HEK293 (cell line): ENCODE measurements at regions of chr12 and their contacts with region 1.

Region 1: DNA sequence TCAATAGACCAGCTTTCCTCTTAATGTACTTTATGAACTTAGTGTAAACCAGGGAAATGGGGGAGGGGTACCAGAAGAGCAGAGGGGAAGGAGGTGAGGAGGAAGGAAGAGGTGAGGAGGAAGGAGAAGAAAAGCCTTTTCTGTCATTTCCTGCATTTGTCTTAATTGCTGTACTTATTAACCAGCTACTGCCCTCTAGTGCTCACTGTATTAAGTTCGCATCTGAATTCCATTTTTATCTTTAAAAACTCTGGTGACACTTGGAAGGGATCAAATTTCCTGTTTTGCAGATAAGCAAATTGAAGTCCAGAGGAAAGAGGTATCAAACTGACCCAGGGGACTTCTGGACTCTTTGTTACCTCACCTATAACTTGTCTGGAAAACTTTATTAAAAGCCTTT is 22.2 kb downstream of the MANSC1 start:
- H3K4me3 ChIP-seq: no peak overlapping the region
- H3K27ac ChIP-seq: no peak overlapping the region
- H3K4me1 ChIP-seq: peaks cover 2% of the 10 kb centered on the region; the same call in 1 of the 2 replicates
- CTCF ChIP-seq: peak; percentile 34; the same call in 1 of the 2 replicates

Region 2: GRCh38 chr12:12081836-12082497 is 245.8 kb before region 1 on chr12:
- CTCF ChIA-PET with region 1: interaction called, 40 read pairs
- POLR2A ChIA-PET with region 1: no interaction called
- H3K4me3 ChIP-seq: no peak overlapping the region
- H3K27ac ChIP-seq: no peak overlapping the region
- H3K4me1 ChIP-seq: no peaks in the 10 kb centered on the region
- CTCF ChIP-seq: peak; percentile 7; the same call in 1 of the 2 replicates

Region 3: GRCh38 chr12:12210983-12211382 is 116.8 kb before region 1 on chr12:
- CTCF ChIA-PET with region 1: no interaction called
- POLR2A ChIA-PET with region 1: no interaction called
- H3K4me3 ChIP-seq: no peak overlapping the region
- H3K27ac ChIP-seq: no peak overlapping the region
- H3K4me1 ChIP-seq: peaks cover 18% of the 10 kb centered on the region
- CTCF ChIP-seq: no peak

Region 4: DNA sequence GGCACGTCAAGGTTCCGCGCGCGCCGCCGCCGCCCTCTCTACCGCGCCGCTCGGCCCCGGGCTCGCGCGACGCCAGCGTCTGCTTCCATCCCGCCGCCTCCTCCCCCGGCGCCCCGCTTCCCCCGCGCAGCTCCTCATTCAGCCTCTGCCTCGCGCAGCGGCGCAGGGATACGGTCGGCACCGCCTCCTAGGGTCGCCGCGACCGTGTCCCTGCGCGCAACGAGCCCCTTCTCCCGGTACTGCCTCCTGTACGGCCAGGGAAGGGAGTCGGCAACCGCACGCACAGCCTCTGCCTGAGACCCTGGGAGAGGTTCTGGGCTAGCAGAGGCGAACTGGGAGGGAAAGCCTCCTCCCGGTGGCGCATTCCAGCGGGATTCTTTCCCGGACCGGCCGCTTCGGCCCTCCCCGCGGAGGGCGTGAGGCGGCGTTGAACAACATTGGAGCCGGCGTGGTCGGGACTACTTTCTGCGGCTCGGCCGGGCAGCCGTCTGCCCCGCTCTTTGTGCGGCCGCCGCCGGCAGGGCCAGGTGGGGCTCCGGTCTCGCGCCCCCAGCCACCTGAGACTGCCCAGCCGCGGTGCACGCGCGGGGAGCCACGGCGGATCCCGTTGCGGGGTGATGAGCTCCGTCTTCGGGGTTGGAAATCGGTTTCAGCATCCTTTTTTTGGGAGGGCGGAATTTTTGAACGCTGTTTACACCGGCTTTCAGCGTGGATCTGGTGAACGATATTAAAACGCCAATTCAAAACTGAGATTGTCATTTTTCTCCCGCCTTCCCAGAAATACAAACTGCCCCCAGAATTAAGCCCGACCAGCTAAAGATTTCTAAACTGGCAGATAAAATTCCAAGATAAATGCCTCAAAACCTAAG is 60.7 kb before region 1 on chr12 and contains the start of gene LRP6:
- CTCF ChIA-PET with region 1: interaction called, 12 read pairs
- POLR2A ChIA-PET with region 1: interaction called, 12 read pairs
- H3K4me3 ChIP-seq: peak within 1 kb of the TSS; percentile 98
- H3K27ac ChIP-seq: peak within 1 kb of the TSS; percentile 100
- H3K4me1 ChIP-seq: no peaks in the 10 kb centered on the region; the same call in 1 of the 2 replicates
- CTCF ChIP-seq: peak; percentile 63

Region 5: DNA sequence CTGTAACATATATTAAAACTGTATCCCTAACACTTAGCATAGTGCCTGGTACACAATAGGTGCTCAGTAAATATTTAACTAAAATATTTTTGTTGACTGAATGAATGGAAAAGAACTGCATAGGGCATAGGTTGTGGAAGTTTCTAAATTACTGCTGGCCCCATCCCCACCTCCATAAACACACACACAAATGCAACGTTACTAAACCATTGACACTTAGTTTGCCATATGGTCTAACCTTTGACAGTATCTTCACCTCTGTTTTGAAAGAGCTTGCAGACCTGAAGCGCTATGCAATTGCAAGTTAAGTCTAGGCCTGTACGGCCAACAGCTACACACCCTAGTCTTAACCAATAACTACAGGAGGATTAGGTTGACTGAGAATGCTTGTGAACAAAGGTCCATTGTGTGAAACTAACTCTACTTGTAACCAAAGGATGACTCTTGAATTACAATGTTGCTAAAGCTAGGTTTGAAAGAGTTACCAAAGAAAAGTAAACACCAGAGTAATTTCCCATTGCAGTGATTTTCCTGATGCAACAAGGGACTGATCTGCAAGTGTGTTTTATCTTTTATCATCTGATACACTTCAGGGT is 23.2 kb after region 1 on chr12:
- CTCF ChIA-PET with region 1: interaction called, 10 read pairs
- POLR2A ChIA-PET with region 1: interaction called, 4 read pairs
- H3K4me3 ChIP-seq: no peak overlapping the region
- H3K27ac ChIP-seq: 0 out of 2 replicates have a peak overlapping the region, but pooled peaks have one; percentile 69
- H3K4me1 ChIP-seq: peaks cover 3% of the 10 kb centered on the region; the same call in 1 of the 2 replicates
- CTCF ChIP-seq: no peak

Region 6: DNA sequence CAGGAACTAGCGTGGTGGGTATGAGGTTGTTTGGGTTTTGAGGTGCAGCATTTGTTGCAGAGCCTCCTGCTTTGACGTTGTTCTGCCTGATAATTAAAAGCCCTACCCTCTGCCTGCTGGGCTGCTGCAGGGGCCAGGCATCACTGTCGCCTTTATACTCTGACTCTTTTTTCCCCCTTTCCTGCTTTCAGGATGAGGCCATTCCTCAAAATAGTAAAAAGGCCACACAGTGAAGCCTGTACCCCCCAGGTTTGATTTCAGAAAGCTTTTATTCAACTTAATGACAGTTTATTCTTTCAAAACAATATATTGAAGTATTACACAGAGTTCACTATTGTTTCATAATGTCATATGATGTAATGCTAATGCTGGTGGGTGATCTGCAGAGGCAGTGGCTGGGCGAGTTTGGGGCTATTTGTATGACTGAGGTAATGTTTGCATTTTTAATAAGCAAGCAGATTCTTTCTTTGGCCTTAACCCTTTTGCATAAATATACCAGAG is 38.2 kb after region 1 on chr12:
- CTCF ChIA-PET with region 1: no interaction called
- POLR2A ChIA-PET with region 1: no interaction called
- H3K4me3 ChIP-seq: no peak overlapping the region
- H3K27ac ChIP-seq: no peak overlapping the region; the same call in 1 of the 2 replicates
- H3K4me1 ChIP-seq: peaks cover 5% of the 10 kb centered on the region; the same call in 1 of the 2 replicates
- CTCF ChIP-seq: no peak

Region 7: DNA sequence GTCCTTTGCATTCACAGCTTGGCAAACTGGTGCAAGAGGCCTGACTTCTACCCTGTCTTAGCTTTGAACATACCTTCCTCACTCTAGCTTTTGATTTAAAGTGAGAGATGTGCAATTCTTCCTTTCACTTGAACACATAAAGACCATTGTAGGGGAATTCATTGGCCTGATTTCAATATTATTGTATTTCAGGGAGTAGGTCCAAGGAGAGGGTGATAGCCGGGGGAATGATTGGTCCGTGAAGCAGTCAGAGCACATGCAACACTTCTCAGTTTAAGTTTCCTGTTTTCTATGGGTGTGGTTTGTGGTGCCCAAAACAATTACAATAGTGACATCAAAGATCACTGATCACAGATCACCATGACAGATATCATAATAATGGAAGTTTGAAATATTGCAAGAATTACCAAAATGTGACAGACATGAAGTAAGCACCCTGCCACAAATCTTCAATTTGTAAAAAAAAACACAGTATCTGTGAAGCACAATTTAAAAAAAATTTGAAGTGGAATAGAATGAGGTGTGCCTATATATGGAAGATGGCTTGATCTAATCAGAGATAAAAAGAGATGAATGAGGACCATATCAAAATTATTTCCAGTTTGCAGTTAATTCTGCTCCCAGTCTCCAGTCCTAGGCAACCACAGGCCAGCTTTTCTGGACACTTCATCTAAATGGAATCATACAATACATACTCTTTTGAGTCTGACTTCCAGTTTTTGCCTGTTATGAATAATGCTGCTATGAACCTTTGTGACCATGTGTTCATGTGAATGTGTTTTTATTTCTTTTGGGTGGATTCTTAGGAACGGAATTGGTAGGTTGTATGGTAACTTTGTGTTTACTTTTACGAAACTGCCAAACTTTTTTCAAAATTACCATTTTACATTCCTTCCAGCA is 52.3 kb after region 1 on chr12:
- CTCF ChIA-PET with region 1: no interaction called
- POLR2A ChIA-PET with region 1: no interaction called
- H3K4me3 ChIP-seq: no peak overlapping the region
- H3K27ac ChIP-seq: no peak overlapping the region
- H3K4me1 ChIP-seq: 0 out of 2 replicates have a peak, but pooled peaks cover 2% of the 10 kb centered on the region
- CTCF ChIP-seq: no peak

Region 8: DNA sequence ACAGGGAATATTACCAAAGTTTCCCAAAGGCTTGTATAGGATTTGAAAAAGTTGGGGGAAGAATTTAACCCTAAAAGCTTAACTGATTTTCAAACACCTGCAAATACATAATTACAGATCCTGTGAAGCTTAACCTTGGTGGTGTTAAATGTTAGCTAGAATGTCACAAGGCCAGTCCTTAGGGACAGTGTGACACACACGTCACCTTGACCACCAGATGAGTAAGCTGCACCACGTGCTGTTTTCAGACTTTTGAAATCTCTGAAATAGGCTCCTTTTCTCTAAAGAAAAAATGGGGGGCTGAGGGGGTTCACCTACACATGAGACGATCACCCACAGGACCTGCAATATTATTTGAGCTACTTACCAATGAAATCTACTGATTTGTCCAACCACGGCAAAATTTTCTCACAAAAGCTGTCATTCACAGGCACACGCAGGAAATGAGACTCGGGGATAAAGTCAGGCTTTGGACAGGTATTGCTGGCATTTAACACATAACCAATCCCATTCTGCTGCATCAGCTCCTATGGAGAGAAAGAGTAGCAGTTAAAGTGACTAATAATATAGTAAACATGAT is 158.9 kb after region 1 on chr12:
- CTCF ChIA-PET with region 1: no interaction called
- POLR2A ChIA-PET with region 1: no interaction called
- H3K4me3 ChIP-seq: no peak overlapping the region
- H3K27ac ChIP-seq: no peak overlapping the region
- H3K4me1 ChIP-seq: no peaks in the 10 kb centered on the region
- CTCF ChIP-seq: no peak